Right cardiac atrium (tissue), 5 donors: ENCODE measurements at regions of chr21 and their contacts with region 1.

Region 1: GRCh38 chr21:46210378-46211136 is 18.0 kb downstream of the LSS start:
- DNase-seq: no peak
- ATAC-seq: no peak
- H3K4me3 ChIP-seq: no peak overlapping the region
- H3K27ac ChIP-seq: no peak overlapping the region
- H3K4me1 ChIP-seq: no peaks in the 10 kb centered on the region
- H3K27me3 ChIP-seq: no peaks in the 10 kb centered on the region

Region 2: GRCh38 chr21:46153247-46154150 is 57.1 kb before region 1 on chr21:
- intact Hi-C with region 1: loop called in 1 of 4 experiments (anchors 10 kb)
- DNase-seq: peak; percentile 57 to 87 (median 84)
- ATAC-seq: peak; percentile 51 to 59
- H3K4me3 ChIP-seq: no peak overlapping the region
- H3K27ac ChIP-seq: no peak overlapping the region
- H3K4me1 ChIP-seq: peaks cover 4% of the 10 kb centered on the region
- H3K27me3 ChIP-seq: no peaks in the 10 kb centered on the region

Region 3: GRCh38 chr21:46273341-46273740 is 62.8 kb after region 1 on chr21:
- intact Hi-C with region 1: loop called in 1 of 4 experiments (anchors 10 kb)
- DNase-seq: no peak
- ATAC-seq: no peak
- H3K4me3 ChIP-seq: no peak overlapping the region
- H3K27ac ChIP-seq: no peak overlapping the region
- H3K4me1 ChIP-seq: no peaks in the 10 kb centered on the region
- H3K27me3 ChIP-seq: no peaks in the 10 kb centered on the region

Region 4: GRCh38 chr21:46392921-46393320 is 182.4 kb after region 1 on chr21:
- intact Hi-C with region 1: no loop called
- DNase-seq: peak in 2 of 3 donors; percentile 51 to 74
- ATAC-seq: peak; percentile 48 to 54
- H3K4me3 ChIP-seq: no peak overlapping the region
- H3K27ac ChIP-seq: peak overlapping the region; percentile 3
- H3K4me1 ChIP-seq: no peaks in the 10 kb centered on the region
- H3K27me3 ChIP-seq: no peaks in the 10 kb centered on the region